HEK293 (cell line): ENCODE measurements at regions of chr2 and their contacts with region 1.

Region 1: GRCh38 chr2:165874445-165875039 is 79.0 kb downstream of the TTC21B start:
- H3K4me3 ChIP-seq: no peak overlapping the region
- H3K27ac ChIP-seq: no peak overlapping the region
- H3K4me1 ChIP-seq: no peaks in the 10 kb centered on the region
- CTCF ChIP-seq: peak; percentile 56

Region 2: GRCh38 chr2:165401285-165401852 is 473.2 kb before region 1 on chr2:
- CTCF ChIA-PET with region 1: interaction called, 26 read pairs
- POLR2A ChIA-PET with region 1: no interaction called
- H3K4me3 ChIP-seq: no peak overlapping the region
- H3K27ac ChIP-seq: no peak overlapping the region
- H3K4me1 ChIP-seq: peaks cover 15% of the 10 kb centered on the region
- CTCF ChIP-seq: peak; percentile 42; the same call in 1 of the 2 replicates

Region 3: GRCh38 chr2:165691615-165692014 is 182.9 kb before region 1 on chr2:
- CTCF ChIA-PET with region 1: interaction called, 11 read pairs
- POLR2A ChIA-PET with region 1: no interaction called
- H3K4me3 ChIP-seq: no peak overlapping the region
- H3K27ac ChIP-seq: no peak overlapping the region
- H3K4me1 ChIP-seq: no peaks in the 10 kb centered on the region
- CTCF ChIP-seq: no peak

Region 4: GRCh38 chr2:165778653-165779451 is 95.7 kb before region 1 on chr2:
- CTCF ChIA-PET with region 1: interaction called, 12 read pairs
- POLR2A ChIA-PET with region 1: no interaction called
- H3K4me3 ChIP-seq: no peak overlapping the region
- H3K27ac ChIP-seq: no peak overlapping the region
- H3K4me1 ChIP-seq: peaks cover 25% of the 10 kb centered on the region; the same call in 1 of the 2 replicates
- CTCF ChIP-seq: peak; percentile 46

Region 5: DNA sequence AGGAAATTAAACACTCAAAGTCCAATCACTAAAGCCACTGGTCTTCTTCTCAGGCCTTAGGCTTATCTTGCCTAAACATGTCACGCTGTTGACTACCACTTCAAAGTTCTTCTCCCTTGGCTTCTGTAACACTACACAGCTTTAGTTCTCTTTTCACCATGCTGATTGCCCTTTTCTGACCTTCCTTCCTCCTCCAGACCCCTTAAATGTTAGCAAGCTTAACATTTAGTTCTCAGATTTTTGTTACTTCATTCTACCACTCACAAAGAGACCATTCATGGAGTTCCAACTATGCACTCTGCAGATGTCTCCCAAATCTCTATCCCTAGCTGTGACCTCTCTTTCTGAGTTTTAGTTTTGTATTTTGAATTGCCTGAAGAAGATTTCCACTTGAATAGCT is 14.6 kb after region 1 on chr2:
- CTCF ChIA-PET with region 1: interaction called, 10 read pairs
- POLR2A ChIA-PET with region 1: no interaction called
- H3K4me3 ChIP-seq: no peak overlapping the region
- H3K27ac ChIP-seq: no peak overlapping the region
- H3K4me1 ChIP-seq: no peaks in the 10 kb centered on the region
- CTCF ChIP-seq: no peak